ENCODE measurements at regions of chr3 and their contacts with region 1.

Region 1: GRCh38 chr3:20537234-20537633 is 351.2 kb upstream of the SGO1 start:
- DNase-seq: no peak
- H3K4me3 ChIP-seq: no peak overlapping the region
- H3K27ac ChIP-seq: no peak overlapping the region
- H3K4me1 ChIP-seq: no peaks in the 10 kb centered on the region
- H3K27me3 ChIP-seq: no peaks in the 10 kb centered on the region
- CTCF ChIP-seq: no peak
- POLR2A ChIP-seq: no peak

Region 2: GRCh38 chr3:20125897-20126296 is 411.3 kb before region 1 on chr3:
- intact Hi-C with region 1: loop called (anchors 5 kb)
- DNase-seq: no peak
- H3K4me3 ChIP-seq: peak overlapping the region in 1 of 3 donors; percentile 31
- H3K27ac ChIP-seq: peak overlapping the region in 1 of 2 donors; percentile 29
- H3K4me1 ChIP-seq: no peaks in the 10 kb centered on the region
- H3K27me3 ChIP-seq: no peaks in the 10 kb centered on the region
- CTCF ChIP-seq: no peak
- POLR2A ChIP-seq: no peak

Measured in breast epithelium (tissue), 4 donors.